Activated CD4-positive, alpha-beta memory T cell treated with anti-CD3 and anti-CD28 coated beads, Interleukin-2, amount 10 ng/mL, durations not matched to agents 7 days and 5 days (primary cell): ENCODE measurements at regions of chr2 and their contacts with region 1.

Region 1: DNA sequence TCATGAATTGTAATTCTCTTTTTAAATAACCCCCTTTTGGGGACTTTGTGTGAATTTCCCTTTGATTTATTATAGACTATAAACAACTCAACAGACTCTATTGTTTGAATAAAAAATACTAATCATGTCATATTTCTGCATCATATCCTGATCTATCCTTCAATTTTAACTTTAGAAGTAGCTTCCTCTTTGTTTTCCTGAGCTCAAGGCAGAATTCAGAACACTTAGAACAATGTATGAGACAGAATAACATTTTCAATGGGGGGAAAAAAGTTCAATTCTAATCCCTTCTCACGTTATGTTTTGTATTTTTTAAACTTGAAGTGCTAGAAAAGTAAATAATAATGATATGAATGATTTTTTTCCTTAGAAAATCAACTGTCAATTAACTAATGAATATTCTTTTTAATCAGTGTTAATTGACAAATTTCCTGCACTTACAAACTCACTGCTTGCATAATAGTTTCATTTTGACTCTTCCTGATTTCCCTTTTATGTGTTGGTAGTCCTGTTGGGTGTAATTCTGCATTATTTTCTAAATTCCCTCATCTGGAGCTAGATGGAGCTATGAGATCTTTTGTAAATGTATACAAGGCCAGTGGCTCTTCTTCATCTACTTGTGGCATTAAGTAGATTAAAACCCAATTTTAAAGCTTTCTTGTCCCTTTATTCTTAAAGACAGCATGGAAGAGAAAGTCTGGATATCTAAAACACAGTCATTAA is 326.1 kb downstream of the PARD3B start:
- DNase-seq: no peak
- H3K4me3 Mint-ChIP-seq: no peak overlapping the region
- H3K27ac Mint-ChIP-seq: peak overlapping the region; percentile 5
- H3K4me1 Mint-ChIP-seq: peaks cover 16% of the 10 kb centered on the region
- H3K27me3 Mint-ChIP-seq: peaks cover 18% of the 10 kb centered on the region

Region 2: GRCh38 chr2:204505946-204506345 is 365.4 kb before region 1 on chr2:
- CTCF ChIA-PET with region 1: no interaction called
- POLR2A ChIA-PET with region 1: no interaction called
- DNase-seq: no peak
- H3K4me3 Mint-ChIP-seq: no peak overlapping the region
- H3K27ac Mint-ChIP-seq: no peak overlapping the region
- H3K4me1 Mint-ChIP-seq: no peaks in the 10 kb centered on the region
- H3K27me3 Mint-ChIP-seq: no peaks in the 10 kb centered on the region

Region 3: GRCh38 chr2:205675861-205676516 is 804.6 kb after region 1 on chr2:
- CTCF ChIA-PET with region 1: interaction called, 23 read pairs
- POLR2A ChIA-PET with region 1: no interaction called
- DNase-seq: no peak
- H3K4me3 Mint-ChIP-seq: no peak overlapping the region
- H3K27ac Mint-ChIP-seq: no peak overlapping the region
- H3K4me1 Mint-ChIP-seq: peaks cover 4% of the 10 kb centered on the region
- H3K27me3 Mint-ChIP-seq: peaks cover 31% of the 10 kb centered on the region